ENCODE measurements at regions of chr1 and their contacts with region 1.

Region 1: GRCh38 chr1:158035976-158036583 is 42.6 kb downstream of the KIRREL1 start:
- DNase-seq: peak; percentile 49 to 77 (median 69)
- H3K4me3 ChIP-seq: no peak overlapping the region
- H3K27ac ChIP-seq: no peak overlapping the region
- H3K4me1 ChIP-seq: peaks cover 22% of the 10 kb centered on the region
- H3K27me3 ChIP-seq: no peaks in the 10 kb centered on the region
- CTCF ChIP-seq: peak; percentile 81 to 90 (median 88)
- EP300 ChIP-seq: no peak
- POLR2A ChIP-seq: no peak

Region 2: DNA sequence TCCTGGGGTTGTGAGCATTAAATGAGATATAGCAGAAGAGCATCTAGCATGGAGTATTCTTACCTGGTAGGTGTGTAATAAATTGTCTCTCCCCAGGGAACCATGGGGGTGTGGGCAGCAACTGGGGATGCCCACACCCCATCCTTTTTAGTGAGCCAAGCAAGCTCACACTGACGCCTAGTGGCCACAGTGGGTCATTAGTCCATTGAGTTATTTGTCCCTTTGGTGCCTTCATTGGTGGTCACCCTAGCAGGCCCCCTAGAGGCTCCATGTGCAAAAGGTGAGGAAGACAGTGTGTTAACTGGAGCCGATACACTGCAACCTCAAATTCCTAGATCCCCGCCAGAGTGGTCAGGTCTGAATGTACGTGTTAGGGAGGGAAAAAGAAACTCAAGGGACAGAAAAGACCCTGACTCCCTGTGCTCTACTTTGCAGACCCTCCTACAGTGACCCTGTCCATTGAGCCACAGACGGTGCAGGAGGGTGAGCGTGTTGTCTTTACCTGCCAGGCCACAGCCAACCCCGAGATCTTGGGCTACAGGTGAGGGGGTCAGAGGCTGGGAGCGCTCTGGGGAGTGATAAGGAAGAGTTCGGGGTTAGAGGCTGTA is 51.3 kb after region 1 on chr1:
- intact Hi-C with region 1: loop called in 1 of 4 experiments (anchors 10 kb)
- DNase-seq: peak; percentile 47 to 71 (median 61)
- H3K4me3 ChIP-seq: no peak overlapping the region
- H3K27ac ChIP-seq: no peak overlapping the region
- H3K4me1 ChIP-seq: no peaks in the 10 kb centered on the region
- H3K27me3 ChIP-seq: no peaks in the 10 kb centered on the region
- CTCF ChIP-seq: peak; percentile 61 to 72 (median 68)
- EP300 ChIP-seq: no peak
- POLR2A ChIP-seq: no peak

Region 3: GRCh38 chr1:158117854-158118704 is 82.0 kb after region 1 on chr1:
- intact Hi-C with region 1: loop called in 1 of 4 experiments (anchors 5 kb)
- DNase-seq: peak; percentile 44 to 71 (median 53)
- H3K4me3 ChIP-seq: peak overlapping the region; percentile 12
- H3K27ac ChIP-seq: no peak overlapping the region
- H3K4me1 ChIP-seq: peaks cover 2% of the 10 kb centered on the region
- H3K27me3 ChIP-seq: no peaks in the 10 kb centered on the region
- CTCF ChIP-seq: peak in 2 of 3 donors; percentile 21 to 37
- EP300 ChIP-seq: no peak
- POLR2A ChIP-seq: no peak